ENCODE measurements at regions of chr18 and their contacts with region 1.

Region 1: DNA sequence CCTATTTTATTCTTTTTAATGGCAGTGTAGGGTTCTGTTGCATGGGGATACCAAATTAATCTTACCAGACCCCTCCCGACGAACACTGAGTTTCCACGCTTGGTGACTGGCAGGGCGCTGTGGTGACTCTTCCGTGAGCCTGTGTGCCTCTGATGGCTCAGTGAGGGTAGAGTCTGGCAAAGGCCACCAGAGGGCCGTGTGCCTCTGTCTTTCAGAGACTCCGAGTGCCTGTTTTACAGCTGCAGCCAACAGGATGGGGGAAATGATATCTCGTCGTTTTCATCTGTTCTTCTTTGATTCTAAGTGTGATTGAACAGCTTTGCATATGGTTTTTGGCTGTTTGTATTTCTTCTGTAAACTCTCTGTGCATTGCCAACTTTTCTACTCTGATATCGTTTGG is 99.8 kb downstream of the ZNF236 start:
- DNase-seq: peak; percentile 66
- H3K4me3 ChIP-seq: no peak overlapping the region
- H3K27ac ChIP-seq: no peak overlapping the region
- H3K4me1 ChIP-seq: no peaks in the 10 kb centered on the region
- H3K27me3 ChIP-seq: no peaks in the 10 kb centered on the region
- CTCF ChIP-seq: peak; percentile 47 to 76
- POLR2A ChIP-seq: no peak

Region 2: GRCh38 chr18:76725445-76725844 is 196.7 kb before region 1 on chr18:
- CTCF ChIA-PET with region 1: no interaction called
- POLR2A ChIA-PET with region 1: no interaction called
- dilution Hi-C with region 1: no loop called
- intact Hi-C with region 1: no loop called
- DNase-seq: no peak
- H3K4me3 ChIP-seq: no peak overlapping the region
- H3K27ac ChIP-seq: no peak overlapping the region
- H3K4me1 ChIP-seq: no peaks in the 10 kb centered on the region
- H3K27me3 ChIP-seq: no peaks in the 10 kb centered on the region
- CTCF ChIP-seq: no peak
- POLR2A ChIP-seq: no peak

Region 3: GRCh38 chr18:76736309-76736708 is 185.8 kb before region 1 on chr18:
- CTCF ChIA-PET with region 1: no interaction called
- POLR2A ChIA-PET with region 1: no interaction called
- dilution Hi-C with region 1: no loop called
- intact Hi-C with region 1: no loop called
- DNase-seq: no peak
- H3K4me3 ChIP-seq: no peak overlapping the region
- H3K27ac ChIP-seq: no peak overlapping the region
- H3K4me1 ChIP-seq: peaks cover 4% of the 10 kb centered on the region
- H3K27me3 ChIP-seq: no peaks in the 10 kb centered on the region
- CTCF ChIP-seq: no peak
- POLR2A ChIP-seq: no peak

Region 4: DNA sequence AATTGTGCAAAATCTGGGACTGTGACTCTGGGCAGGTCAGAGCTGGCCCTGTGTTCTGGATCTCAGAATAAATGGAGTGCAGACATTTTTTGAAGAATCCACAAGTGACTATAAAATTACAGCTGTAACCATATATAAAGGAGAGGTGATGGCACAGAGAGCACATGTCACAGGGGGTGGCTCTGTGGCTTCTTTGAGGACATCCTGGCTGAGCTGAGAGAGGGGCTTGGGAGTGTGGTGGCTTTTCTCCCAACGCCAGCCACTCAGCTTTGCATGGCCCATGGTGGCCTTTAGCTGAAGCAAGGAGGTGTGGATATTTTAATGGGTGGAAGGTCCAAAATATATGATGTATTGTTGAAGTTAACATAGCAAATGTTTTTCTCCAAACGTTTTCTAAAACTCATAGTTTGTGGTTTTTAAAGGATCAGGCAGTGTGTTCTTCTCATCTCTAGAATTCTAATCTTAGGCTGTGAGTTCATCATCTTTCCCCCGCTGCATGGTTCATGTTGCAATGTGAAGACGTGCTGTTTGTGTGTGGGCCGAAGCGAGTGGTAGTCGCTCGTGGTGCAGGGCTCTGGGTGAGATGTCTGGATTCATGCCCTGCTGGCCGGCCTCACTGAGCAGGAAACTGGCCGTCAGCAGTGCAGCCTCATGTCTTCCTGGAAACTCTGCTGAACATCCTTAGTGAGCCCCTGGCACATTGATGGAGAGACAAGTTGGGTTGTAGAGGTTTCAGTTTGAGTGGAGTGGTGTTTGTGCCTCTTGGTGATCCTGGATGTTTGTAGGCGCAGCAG is 10.1 kb after region 1 on chr18:
- CTCF ChIA-PET with region 1: interaction called, 12 read pairs
- POLR2A ChIA-PET with region 1: no interaction called
- dilution Hi-C with region 1: no loop called
- intact Hi-C with region 1: no loop called
- DNase-seq: peak; percentile 8
- H3K4me3 ChIP-seq: no peak overlapping the region
- H3K27ac ChIP-seq: no peak overlapping the region
- H3K4me1 ChIP-seq: no peaks in the 10 kb centered on the region
- H3K27me3 ChIP-seq: no peaks in the 10 kb centered on the region
- CTCF ChIP-seq: no peak
- POLR2A ChIP-seq: no peak

Region 5: DNA sequence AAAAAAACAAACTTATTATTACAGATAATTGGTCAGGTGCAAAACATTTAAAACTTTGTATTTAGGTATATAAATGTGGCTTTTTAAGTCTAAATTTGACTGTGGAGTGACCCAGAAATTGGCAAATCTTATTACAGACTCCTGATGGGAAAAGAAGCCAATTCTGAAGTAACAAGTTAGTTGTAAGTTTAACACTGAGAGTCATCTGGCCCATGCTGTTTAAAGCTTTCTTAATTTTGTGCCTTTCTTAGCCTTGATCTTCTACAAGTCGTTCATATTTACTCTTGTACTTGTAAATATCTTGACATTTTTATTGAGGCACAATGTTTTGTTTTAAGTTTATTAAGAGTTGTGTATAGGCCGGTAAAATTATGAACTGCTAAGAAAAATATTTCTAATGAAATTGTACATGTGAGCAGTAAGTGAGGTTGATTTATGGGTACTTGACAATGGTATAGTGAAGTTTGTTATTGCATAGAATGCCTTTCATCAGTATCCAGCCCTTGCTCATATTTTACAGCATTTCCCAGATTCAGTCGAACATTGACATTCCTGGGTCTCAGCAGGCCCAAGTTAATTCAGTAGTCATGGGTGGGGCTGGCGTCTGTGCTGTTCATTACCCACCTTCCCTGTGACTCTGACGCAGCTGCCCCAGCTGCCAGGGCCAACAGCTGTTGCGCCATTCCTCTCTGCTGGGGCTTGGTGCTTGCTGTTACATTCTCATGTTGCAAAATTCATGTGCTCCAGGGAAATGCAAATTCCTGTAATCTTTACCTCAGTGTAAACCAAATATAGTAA is 21.6 kb after region 1 on chr18:
- CTCF ChIA-PET with region 1: interaction called, 12 read pairs
- POLR2A ChIA-PET with region 1: no interaction called
- dilution Hi-C with region 1: no loop called
- intact Hi-C with region 1: no loop called
- DNase-seq: no peak
- H3K4me3 ChIP-seq: no peak overlapping the region
- H3K27ac ChIP-seq: no peak overlapping the region
- H3K4me1 ChIP-seq: no peaks in the 10 kb centered on the region
- H3K27me3 ChIP-seq: no peaks in the 10 kb centered on the region
- CTCF ChIP-seq: no peak
- POLR2A ChIP-seq: no peak

Region 6: DNA sequence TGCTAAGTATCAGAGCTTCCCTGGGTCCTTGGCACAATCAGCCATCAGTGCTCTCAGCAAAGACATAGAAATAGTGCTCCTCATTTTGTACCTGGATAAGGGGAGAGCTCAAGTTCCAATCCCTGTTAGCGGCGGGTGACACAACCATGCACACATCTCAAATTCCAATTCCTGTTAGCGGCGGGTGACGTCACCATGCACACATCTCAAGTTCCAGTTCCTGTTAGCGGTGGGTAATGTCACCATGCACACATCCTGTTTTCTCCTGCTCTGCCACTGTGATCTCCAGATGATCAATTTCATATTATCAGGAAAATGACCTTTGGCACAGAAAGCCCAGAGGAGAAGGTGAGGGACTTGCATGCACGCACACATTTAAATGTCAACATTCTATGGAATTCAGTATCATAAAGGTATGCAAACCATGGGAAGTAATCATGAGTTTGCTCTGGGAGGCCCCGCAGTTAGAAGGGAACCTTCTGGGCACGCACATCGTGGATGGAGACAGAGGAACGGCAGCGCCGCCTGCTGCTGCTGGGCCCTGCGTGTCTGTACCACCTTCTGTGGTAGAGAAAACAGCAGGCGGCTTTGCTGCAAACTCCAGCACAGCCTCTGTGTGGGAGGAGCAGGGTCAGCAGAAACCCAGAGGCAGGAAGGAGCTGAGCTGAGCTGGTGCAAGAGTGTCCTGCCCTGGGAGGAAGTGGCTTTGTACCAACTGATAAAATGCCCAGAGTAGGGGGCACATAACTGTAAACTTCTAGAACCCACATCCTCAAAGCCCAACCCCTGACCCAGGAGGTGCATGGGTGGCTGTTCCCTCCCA is 132.7 kb after region 1 on chr18:
- CTCF ChIA-PET with region 1: interaction called, 5 read pairs
- POLR2A ChIA-PET with region 1: no interaction called
- dilution Hi-C with region 1: no loop called
- intact Hi-C with region 1: loop called (anchors 2 kb)
- DNase-seq: peak; percentile 88
- H3K4me3 ChIP-seq: peak overlapping the region in 1 of 3 experiments; percentile 17
- H3K27ac ChIP-seq: peak overlapping the region; percentile 37
- H3K4me1 ChIP-seq: peaks cover 22% of the 10 kb centered on the region
- H3K27me3 ChIP-seq: no peaks in the 10 kb centered on the region
- CTCF ChIP-seq: peak; percentile 64 to 84
- POLR2A ChIP-seq: no peak

Measured in endothelial cell of umbilical vein (primary cell).